Motor neuron (in vitro differentiated cells): ENCODE measurements at regions of chr7 and their contacts with region 1.

Region 1: DNA sequence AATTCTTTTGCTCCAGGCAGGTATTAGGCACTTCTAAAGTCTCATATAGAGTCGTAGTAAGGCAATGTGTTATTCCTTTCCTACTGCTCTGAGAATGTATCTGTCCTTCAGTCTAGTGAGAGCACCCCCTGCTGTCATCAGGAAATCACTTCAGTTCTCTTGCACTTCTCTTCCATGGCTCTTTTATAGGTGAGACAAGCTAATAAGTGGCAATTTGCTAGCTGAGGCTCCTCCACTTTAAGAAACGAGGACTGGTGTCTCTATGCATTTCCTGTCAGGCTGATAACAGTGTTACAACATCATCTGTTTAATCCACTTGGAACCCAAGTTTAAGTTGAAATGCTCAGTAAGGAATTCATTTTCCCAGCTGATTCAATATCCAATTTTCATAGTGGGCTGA is 350.6 kb downstream of the TFEC start:
- ATAC-seq: peak in 4 of 8 experiments; percentile 38 to 68 (median 46)
- H3K4me3 ChIP-seq: no peak overlapping the region
- H3K27ac ChIP-seq: no peak overlapping the region
- H3K4me1 ChIP-seq: no peaks in the 10 kb centered on the region

Region 2: DNA sequence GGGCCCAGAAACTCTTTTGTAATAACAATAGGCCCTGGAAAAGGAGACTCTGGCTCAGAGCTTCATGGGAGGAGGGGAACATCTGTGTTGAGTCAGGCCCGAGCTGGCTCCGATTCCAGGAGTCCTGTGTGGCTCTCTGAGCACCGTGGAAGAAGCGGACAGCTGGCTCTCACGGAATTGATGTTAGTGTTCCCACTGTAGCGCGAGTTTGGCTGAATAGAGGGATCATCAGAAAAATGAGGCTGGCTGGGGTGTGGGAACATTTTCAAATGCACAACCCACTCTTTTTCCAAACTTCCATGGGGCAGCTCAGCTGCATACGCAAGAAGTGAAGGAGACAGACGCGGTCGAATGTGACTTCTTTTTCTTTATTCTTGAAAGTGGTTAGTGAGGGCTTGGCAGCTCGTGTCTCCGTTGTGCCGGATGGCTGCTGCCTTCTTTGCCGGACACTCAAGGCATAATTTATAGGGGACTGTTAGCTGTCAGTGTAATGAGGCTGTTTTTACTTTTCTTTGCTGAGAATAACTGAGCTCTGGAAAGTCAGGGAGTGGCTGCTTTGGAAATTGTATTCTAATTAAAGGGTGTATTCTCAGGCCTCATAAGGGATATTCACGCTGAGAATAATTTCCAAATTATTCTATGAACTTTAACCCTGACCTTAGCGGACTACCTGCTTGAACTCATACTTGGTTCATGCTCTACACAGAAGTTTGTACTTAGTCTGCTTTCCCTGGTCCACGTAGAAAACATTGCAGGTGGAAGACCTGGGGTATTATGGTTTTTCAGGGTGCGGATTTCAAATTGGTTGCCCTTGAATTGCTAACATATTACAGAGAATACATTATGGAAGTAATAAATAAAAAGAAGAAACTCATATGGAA is 735.0 kb before region 1 on chr7:
- in situ Hi-C with region 1: no loop called
- ATAC-seq: peak; percentile 88 to 99 (median 95)
- H3K4me3 ChIP-seq: peak overlapping the region; percentile 11 to 31 (median 18)
- H3K27ac ChIP-seq: no peak overlapping the region
- H3K4me1 ChIP-seq: peaks cover 3 to 7% of the 10 kb centered on the region in 2 donors

Region 3: GRCh38 chr7:115356139-115356746 is 323.7 kb before region 1 on chr7:
- in situ Hi-C with region 1: loop called in 1 of 9 experiments (anchors 25 kb)
- ATAC-seq: no peak
- H3K4me3 ChIP-seq: no peak overlapping the region
- H3K27ac ChIP-seq: no peak overlapping the region
- H3K4me1 ChIP-seq: peaks cover 0 to 6% of the 10 kb centered on the region in 2 donors